Naive thymus-derived CD4-positive, alpha-beta T cell (primary cell): ENCODE measurements at regions of chr3 and their contacts with region 1.

Region 1: GRCh38 chr3:133661454-133662277 is at the start of gene TOPBP1:
- DNase-seq: peak; percentile 68 to 88 (median 85)
- ATAC-seq: peak; percentile 90
- H3K4me3 ChIP-seq: peak within 1 kb of the TSS; percentile 80
- H3K4me3 Mint-ChIP-seq: peak within 1 kb of the TSS; percentile 90 to 99 (median 97)
- H3K27ac ChIP-seq: peak within 1 kb of the TSS; percentile 79
- H3K27ac Mint-ChIP-seq: peak within 1 kb of the TSS; percentile 93 to 99 (median 97)
- H3K4me1 ChIP-seq: peaks cover 8 to 25% of the 10 kb centered on the region in 2 donors
- H3K4me1 Mint-ChIP-seq: peaks cover 30 to 53% (median 46%) of the 10 kb centered on the region in 7 donors
- H3K27me3 ChIP-seq: no peaks in the 10 kb centered on the region
- H3K27me3 Mint-ChIP-seq: no peaks in the 10 kb centered on the region
- total RNA-seq, gene TOPBP1: 26.3 to 73.8 (median 37.6) TPM

Region 2: GRCh38 chr3:133448478-133449122 is 213.1 kb before region 1 on chr3:
- CTCF ChIA-PET with region 1: no interaction called
- POLR2A ChIA-PET with region 1: interaction called, 3 read pairs
- intact Hi-C with region 1: loop called in 1 of 2 experiments (anchors 5 kb)
- DNase-seq: peak in 1 of 9 donors; percentile 41
- ATAC-seq: peak; percentile 76
- H3K4me3 ChIP-seq: no peak overlapping the region
- H3K4me3 Mint-ChIP-seq: peak overlapping the region in 3 of 10 donors; percentile 31 to 54 (median 36)
- H3K27ac ChIP-seq: no peak overlapping the region
- H3K27ac Mint-ChIP-seq: peak overlapping the region in 8 of 9 donors; percentile 14 to 87 (median 70)
- H3K4me1 ChIP-seq: peaks cover 5 to 14% of the 10 kb centered on the region in 2 donors
- H3K4me1 Mint-ChIP-seq: peaks cover 7 to 26% (median 15%) of the 10 kb centered on the region in 7 donors
- H3K27me3 ChIP-seq: no peaks in the 10 kb centered on the region
- H3K27me3 Mint-ChIP-seq: no peaks in the 10 kb centered on the region

Region 3: DNA sequence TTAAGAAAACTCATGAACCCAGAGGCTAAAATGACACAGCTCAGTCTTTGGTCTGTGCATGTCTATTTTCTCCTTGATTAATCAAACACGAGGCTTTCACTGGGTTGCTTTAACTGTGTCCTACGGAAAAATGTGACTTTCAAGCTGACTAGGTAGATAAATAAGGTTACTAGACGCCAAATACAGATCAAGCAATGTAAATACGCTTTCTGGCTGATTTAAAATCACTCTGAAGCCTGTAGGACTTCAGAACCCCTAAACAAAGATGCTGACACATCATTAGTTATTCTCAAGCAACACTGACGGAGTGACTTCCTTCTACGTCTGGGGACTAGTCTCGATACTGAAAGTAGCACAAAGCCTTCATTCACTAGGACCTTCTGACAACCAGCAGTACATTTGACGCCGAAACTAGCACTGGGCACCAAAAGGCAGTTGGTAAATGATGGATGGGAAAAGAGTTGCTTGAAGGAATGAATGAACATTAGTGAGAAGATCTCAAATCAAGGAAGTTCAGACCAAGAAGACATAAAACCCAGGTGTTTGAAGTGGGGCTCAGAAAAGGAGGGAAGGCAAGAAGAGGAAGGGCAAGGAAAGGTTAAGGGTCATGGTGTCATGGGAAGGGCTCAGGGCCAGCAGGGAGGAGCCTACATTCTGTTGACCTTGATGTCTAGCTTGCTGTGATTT is 155.3 kb before region 1 on chr3:
- CTCF ChIA-PET with region 1: no interaction called
- POLR2A ChIA-PET with region 1: no interaction called
- intact Hi-C with region 1: loop called (anchors 5 kb)
- DNase-seq: peak in 7 of 9 donors; percentile 23 to 60 (median 50)
- ATAC-seq: peak; percentile 93
- H3K4me3 ChIP-seq: peak overlapping the region; percentile 1
- H3K4me3 Mint-ChIP-seq: peak overlapping the region; percentile 71 to 93 (median 82)
- H3K27ac ChIP-seq: peak overlapping the region; percentile 65
- H3K27ac Mint-ChIP-seq: peak overlapping the region; percentile 88 to 97 (median 94)
- H3K4me1 ChIP-seq: no peaks in the 10 kb centered on the region
- H3K4me1 Mint-ChIP-seq: peaks cover 10 to 19% (median 17%) of the 10 kb centered on the region in 7 donors
- H3K27me3 ChIP-seq: no peaks in the 10 kb centered on the region
- H3K27me3 Mint-ChIP-seq: no peaks in the 10 kb centered on the region

Region 4: DNA sequence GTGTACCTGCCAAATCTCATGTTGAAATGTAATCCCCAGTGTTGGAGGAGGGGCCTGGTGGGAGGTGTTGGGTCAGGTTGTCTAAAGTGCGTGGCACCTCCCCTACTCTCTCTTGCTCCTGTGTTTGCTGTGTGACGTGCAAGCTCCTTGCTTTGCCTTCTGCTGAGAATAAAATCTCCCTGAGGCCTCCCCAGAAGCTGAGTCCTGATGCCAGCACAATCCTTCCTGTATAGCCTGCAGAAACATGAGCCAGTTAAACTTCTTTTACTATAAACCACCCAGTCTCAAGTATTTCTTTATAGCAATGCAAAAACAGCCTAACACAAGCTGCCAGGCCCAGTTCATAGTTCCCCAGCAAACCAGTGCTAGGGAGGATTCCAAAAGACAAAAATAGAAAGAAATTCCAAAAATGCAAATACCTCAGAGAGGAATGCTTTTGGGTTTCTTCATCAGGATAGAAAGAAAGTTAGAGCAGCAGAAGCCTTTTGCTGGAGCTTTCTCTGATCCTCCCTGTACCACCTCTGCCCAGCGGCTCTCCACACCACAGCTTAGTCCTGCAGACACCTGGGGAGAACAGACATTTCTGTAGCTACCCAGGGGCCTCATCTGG is 114.1 kb before region 1 on chr3:
- CTCF ChIA-PET with region 1: no interaction called
- POLR2A ChIA-PET with region 1: no interaction called
- intact Hi-C with region 1: no loop called
- DNase-seq: no peak
- ATAC-seq: no peak
- H3K4me3 ChIP-seq: no peak overlapping the region
- H3K4me3 Mint-ChIP-seq: no peak overlapping the region
- H3K27ac ChIP-seq: no peak overlapping the region
- H3K27ac Mint-ChIP-seq: peak overlapping the region in 3 of 9 donors; percentile 4 to 60 (median 20)
- H3K4me1 ChIP-seq: no peaks in the 10 kb centered on the region
- H3K4me1 Mint-ChIP-seq: peaks cover 0 to 3% (median 0%) of the 10 kb centered on the region in 7 donors
- H3K27me3 ChIP-seq: no peaks in the 10 kb centered on the region
- H3K27me3 Mint-ChIP-seq: peaks cover 0 to 2% (median 0%) of the 10 kb centered on the region in 5 donors

Region 5: GRCh38 chr3:133821767-133822638 is 160.3 kb after region 1 on chr3:
- CTCF ChIA-PET with region 1: no interaction called
- POLR2A ChIA-PET with region 1: no interaction called
- intact Hi-C with region 1: loop called in 1 of 2 experiments (anchors 5 kb)
- DNase-seq: no peak
- ATAC-seq: no peak
- H3K4me3 ChIP-seq: no peak overlapping the region
- H3K4me3 Mint-ChIP-seq: no peak overlapping the region
- H3K27ac ChIP-seq: no peak overlapping the region
- H3K27ac Mint-ChIP-seq: peak overlapping the region in 2 of 9 donors; percentile 10 to 23
- H3K4me1 ChIP-seq: no peaks in the 10 kb centered on the region
- H3K4me1 Mint-ChIP-seq: peaks cover 0 to 6% (median 3%) of the 10 kb centered on the region in 7 donors
- H3K27me3 ChIP-seq: no peaks in the 10 kb centered on the region
- H3K27me3 Mint-ChIP-seq: no peaks in the 10 kb centered on the region

Region 6: GRCh38 chr3:133927540-133928066 is 265.9 kb after region 1 on chr3:
- CTCF ChIA-PET with region 1: interaction called, 3 read pairs
- POLR2A ChIA-PET with region 1: no interaction called
- intact Hi-C with region 1: loop called (anchors 1 to 2 kb)
- DNase-seq: peak; percentile 64 to 88 (median 81)
- ATAC-seq: peak; percentile 97
- H3K4me3 ChIP-seq: peak overlapping the region; percentile 51
- H3K4me3 Mint-ChIP-seq: peak overlapping the region; percentile 58 to 85 (median 74)
- H3K27ac ChIP-seq: peak overlapping the region; percentile 43
- H3K27ac Mint-ChIP-seq: peak overlapping the region in 2 of 9 donors; percentile 56 to 69
- H3K4me1 ChIP-seq: peaks cover 0 to 4% of the 10 kb centered on the region in 2 donors
- H3K4me1 Mint-ChIP-seq: peaks cover 4 to 14% (median 5%) of the 10 kb centered on the region in 7 donors
- H3K27me3 ChIP-seq: peaks cover 0 to 3% of the 10 kb centered on the region in 2 donors
- H3K27me3 Mint-ChIP-seq: peaks cover 5 to 26% (median 10%) of the 10 kb centered on the region in 5 donors